ENCODE measurements at regions of chr17 and their contacts with region 1.

Region 1: GRCh38 chr17:57009737-57010445 is 32.0 kb downstream of the SCPEP1 start:
- DNase-seq: peak; percentile 46 to 64 (median 61)
- H3K4me3 ChIP-seq: no peak overlapping the region
- H3K27ac ChIP-seq: no peak overlapping the region
- H3K4me1 ChIP-seq: peaks cover 4 to 22% (median 11%) of the 10 kb centered on the region in 4 experiments
- H3K27me3 ChIP-seq: peaks cover 0 to 11% (median 6%) of the 10 kb centered on the region in 5 experiments

Region 2: DNA sequence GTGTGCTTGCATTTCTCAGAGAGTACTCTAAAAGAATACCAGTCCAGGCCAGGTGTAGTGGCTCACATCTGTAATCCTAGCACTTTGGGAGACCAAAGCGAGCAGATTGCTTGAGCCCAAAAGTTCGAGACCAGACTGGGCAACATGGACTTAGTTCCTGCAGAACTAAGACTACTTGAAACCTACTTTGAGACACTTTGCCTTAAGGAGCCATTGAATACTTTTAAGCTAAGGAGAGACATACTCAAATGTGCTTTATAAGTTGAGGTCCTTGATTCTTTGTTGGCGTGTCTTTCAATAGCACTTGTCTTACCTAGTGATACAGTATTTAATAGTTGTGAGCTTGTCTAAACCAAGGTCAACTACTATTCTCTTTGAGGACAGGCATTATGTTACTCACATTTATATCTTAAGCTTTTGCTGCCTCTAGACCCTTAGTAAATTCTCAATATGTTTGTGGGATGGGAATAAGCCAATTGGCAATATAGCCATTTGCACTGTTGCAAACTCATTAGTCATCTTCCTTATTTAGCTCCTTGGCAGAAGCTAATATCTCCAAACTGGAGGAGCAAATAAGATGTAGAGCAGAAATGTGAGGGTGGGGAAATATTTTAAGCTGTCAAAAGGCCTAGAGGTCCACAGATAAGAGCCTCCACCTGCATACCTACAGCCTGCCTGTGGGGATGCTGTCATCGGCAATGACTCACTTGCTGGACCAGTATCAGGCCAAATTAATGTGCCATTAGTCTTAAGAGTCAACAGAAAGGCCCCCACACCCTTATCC is 15.7 kb before region 1 on chr17:
- CTCF ChIA-PET with region 1: interaction called, 10 read pairs
- POLR2A ChIA-PET with region 1: no interaction called
- DNase-seq: no peak
- H3K4me3 ChIP-seq: no peak overlapping the region
- H3K27ac ChIP-seq: no peak overlapping the region
- H3K4me1 ChIP-seq: no peaks in the 10 kb centered on the region
- H3K27me3 ChIP-seq: no peaks in the 10 kb centered on the region

Measured in common myeloid progenitor, CD34-positive (primary cell).